ENCODE measurements at regions of chr1 and their contacts with region 1.

Region 1: GRCh38 chr1:205791568-205792180 is 16.4 kb upstream of the RAB29 start:
- DNase-seq: peak; percentile 72 to 86 (median 78)
- ATAC-seq: peak; percentile 97
- H3K4me3 ChIP-seq: no peak overlapping the region
- H3K27ac ChIP-seq: no peak overlapping the region
- H3K4me1 ChIP-seq: peaks cover 7 to 15% of the 10 kb centered on the region in 2 experiments; a peak in 4 of 5 replicates
- H3K27me3 ChIP-seq: no peaks in the 10 kb centered on the region
- CTCF ChIP-seq: peak; percentile 92 to 98 (median 97)
- EP300 ChIP-seq: no peak
- POLR2A ChIP-seq: no peak
- RAD21 ChIP-seq: peak; percentile 95 to 97

Region 2: DNA sequence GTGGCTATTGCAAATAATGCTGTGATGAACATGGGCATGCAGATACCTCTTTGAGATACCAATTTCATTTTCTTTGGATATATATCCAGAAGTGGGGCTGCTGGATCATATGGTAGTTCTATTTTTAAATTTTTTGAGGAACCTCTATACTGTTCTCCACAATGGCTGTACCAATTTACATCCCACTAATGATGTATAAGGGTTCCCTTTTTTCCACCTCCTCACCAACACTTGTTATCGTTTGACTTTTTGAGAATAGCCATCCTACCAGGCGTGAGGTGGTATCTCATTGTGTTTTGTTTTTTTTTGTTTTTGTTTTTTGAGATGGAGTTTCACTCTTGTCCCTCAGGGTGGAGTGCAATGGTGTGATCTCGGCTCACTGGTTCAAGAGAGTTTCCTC is 35.1 kb before region 1 on chr1:
- CTCF ChIA-PET with region 1: no interaction called
- POLR2A ChIA-PET with region 1: no interaction called
- in situ Hi-C with region 1: no loop called
- intact Hi-C with region 1: no loop called
- DNase-seq: no peak
- ATAC-seq: no peak
- H3K4me3 ChIP-seq: no peak overlapping the region
- H3K27ac ChIP-seq: no peak overlapping the region
- H3K4me1 ChIP-seq: peaks cover 0 to 14% of the 10 kb centered on the region in 2 experiments; a peak in 2 of 5 replicates
- H3K27me3 ChIP-seq: no peaks in the 10 kb centered on the region
- CTCF ChIP-seq: no peak
- EP300 ChIP-seq: no peak
- POLR2A ChIP-seq: no peak
- RAD21 ChIP-seq: no peak

Region 3: GRCh38 chr1:205812878-205813754 is 21.4 kb after region 1 on chr1 and contains the start of gene SLC41A1:
- CTCF ChIA-PET with region 1: interaction called, 3 read pairs
- POLR2A ChIA-PET with region 1: interaction called, 5 read pairs
- in situ Hi-C with region 1: no loop called
- intact Hi-C with region 1: loop called (anchors 2 kb)
- DNase-seq: peak; percentile 95 to 100 (median 100)
- ATAC-seq: peak; percentile 95
- H3K4me3 ChIP-seq: peak within 1 kb of the TSS; percentile 85
- H3K27ac ChIP-seq: peak within 1 kb of the TSS; percentile 60
- H3K4me1 ChIP-seq: peaks cover 32 to 41% of the 10 kb centered on the region in 2 experiments; a peak in 4 of 5 replicates
- H3K27me3 ChIP-seq: no peaks in the 10 kb centered on the region
- CTCF ChIP-seq: no peak
- EP300 ChIP-seq: no peak
- POLR2A ChIP-seq: peak; percentile 68
- RAD21 ChIP-seq: no peak
- polyA plus RNA-seq, gene SLC41A1: 4.1 to 5.5 TPM

Region 4: DNA sequence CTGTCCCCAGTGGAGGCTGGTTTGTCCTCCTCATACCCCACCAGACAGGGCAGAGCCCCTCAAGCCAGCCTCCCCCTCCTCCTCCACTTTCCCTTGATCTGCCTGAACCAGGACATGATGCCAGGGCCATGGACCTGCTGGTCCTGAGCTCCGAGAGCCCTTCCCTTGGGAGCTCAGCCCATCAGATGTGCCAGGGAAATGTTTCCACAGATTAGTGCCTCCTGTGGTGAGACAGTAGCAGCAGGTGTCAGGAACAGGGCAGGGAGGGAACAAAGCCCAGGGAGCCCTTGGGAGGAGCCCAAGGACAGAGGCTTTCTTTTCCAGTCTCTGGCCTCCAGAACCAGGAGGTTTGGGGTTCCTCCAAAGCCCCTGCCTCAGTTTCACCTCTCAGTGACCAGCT is 35.9 kb after region 1 on chr1:
- CTCF ChIA-PET with region 1: no interaction called
- POLR2A ChIA-PET with region 1: no interaction called
- in situ Hi-C with region 1: no loop called
- intact Hi-C with region 1: no loop called
- DNase-seq: no peak
- ATAC-seq: 0 out of 3 replicates have a peak, but pooled peaks have one; percentile 34
- H3K4me3 ChIP-seq: no peak overlapping the region
- H3K27ac ChIP-seq: no peak overlapping the region
- H3K4me1 ChIP-seq: no peaks in the 10 kb centered on the region; a peak in 1 of 5 replicates
- H3K27me3 ChIP-seq: peaks cover 29 to 36% of the 10 kb centered on the region in 2 experiments
- CTCF ChIP-seq: no peak; a peak in 1 of 6 replicates
- EP300 ChIP-seq: no peak
- POLR2A ChIP-seq: no peak
- RAD21 ChIP-seq: no peak

Region 5: GRCh38 chr1:205907794-205908193 is 116.1 kb after region 1 on chr1:
- CTCF ChIA-PET with region 1: interaction called, 7 read pairs
- POLR2A ChIA-PET with region 1: interaction called, 3 read pairs
- in situ Hi-C with region 1: no loop called
- intact Hi-C with region 1: loop called (anchors 1 kb)
- DNase-seq: peak in 3 of 4 experiments; percentile 7 to 36 (median 14)
- ATAC-seq: peak; percentile 85
- H3K4me3 ChIP-seq: no peak overlapping the region
- H3K27ac ChIP-seq: no peak overlapping the region
- H3K4me1 ChIP-seq: no peaks in the 10 kb centered on the region
- H3K27me3 ChIP-seq: peaks cover 3 to 5% of the 10 kb centered on the region in 2 experiments; a peak in 4 of 5 replicates
- CTCF ChIP-seq: peak; percentile 59 to 72 (median 63)
- EP300 ChIP-seq: no peak
- POLR2A ChIP-seq: no peak
- RAD21 ChIP-seq: peak; percentile 64 to 71

Region 6: GRCh38 chr1:205925730-205926129 is 134.1 kb after region 1 on chr1:
- CTCF ChIA-PET with region 1: no interaction called
- POLR2A ChIA-PET with region 1: no interaction called
- in situ Hi-C with region 1: loop called (anchors 5 kb)
- intact Hi-C with region 1: no loop called
- DNase-seq: no peak
- ATAC-seq: no peak
- H3K4me3 ChIP-seq: no peak overlapping the region
- H3K27ac ChIP-seq: no peak overlapping the region
- H3K4me1 ChIP-seq: peaks cover under 1 to 10% of the 10 kb centered on the region in 2 experiments; a peak in 3 of 5 replicates
- H3K27me3 ChIP-seq: peaks cover 43 to 96% of the 10 kb centered on the region in 2 experiments
- CTCF ChIP-seq: no peak
- EP300 ChIP-seq: no peak
- POLR2A ChIP-seq: no peak
- RAD21 ChIP-seq: no peak

Region 7: GRCh38 chr1:205977402-205978014 is 185.8 kb after region 1 on chr1:
- CTCF ChIA-PET with region 1: interaction called, 33 read pairs
- POLR2A ChIA-PET with region 1: interaction called, 20 read pairs
- in situ Hi-C with region 1: loop called (anchors 5 kb)
- intact Hi-C with region 1: loop called (anchors 1 kb)
- DNase-seq: peak; percentile 79 to 92 (median 88)
- ATAC-seq: peak; percentile 97
- H3K4me3 ChIP-seq: no peak overlapping the region
- H3K27ac ChIP-seq: no peak overlapping the region
- H3K4me1 ChIP-seq: peaks cover 0 to 4% of the 10 kb centered on the region in 2 experiments; a peak in 1 of 5 replicates
- H3K27me3 ChIP-seq: peaks cover 22 to 41% of the 10 kb centered on the region in 2 experiments
- CTCF ChIP-seq: peak; percentile 96 to 98 (median 98)
- EP300 ChIP-seq: no peak
- POLR2A ChIP-seq: no peak
- RAD21 ChIP-seq: peak; percentile 99 to 100

Region 8: DNA sequence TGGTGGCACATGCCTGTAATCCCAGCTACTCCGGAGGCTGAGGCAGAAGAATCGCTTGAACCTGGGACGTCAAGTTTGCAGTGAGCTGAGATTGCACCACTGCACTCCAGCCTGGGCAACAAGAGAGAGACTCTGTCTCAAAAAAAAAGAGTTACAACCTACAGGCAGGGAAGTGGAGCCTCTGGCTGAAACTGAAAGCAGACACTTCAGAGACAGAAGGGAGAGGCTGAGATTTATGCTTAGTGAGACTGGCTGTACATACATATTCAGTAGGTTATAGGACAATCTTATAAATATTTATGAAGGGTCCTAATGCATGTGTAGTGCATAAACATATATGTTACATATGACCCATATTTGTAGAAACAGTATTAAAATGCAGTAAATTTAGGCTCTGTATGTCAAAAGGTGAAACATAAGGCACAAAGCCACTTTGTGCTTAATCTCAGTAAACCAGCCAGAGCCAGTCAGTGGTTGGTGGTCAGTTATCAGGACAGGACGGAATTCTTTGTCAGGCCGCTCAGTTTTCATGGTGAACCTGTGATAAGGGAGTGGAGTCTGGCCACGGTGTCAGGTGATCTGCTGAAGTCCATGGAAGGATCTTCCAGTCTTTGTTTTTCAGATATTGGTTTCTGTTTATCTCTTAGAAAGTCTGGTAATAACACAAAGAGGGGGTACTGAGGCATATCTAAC is 275.0 kb after region 1 on chr1:
- CTCF ChIA-PET with region 1: no interaction called
- POLR2A ChIA-PET with region 1: no interaction called
- in situ Hi-C with region 1: no loop called
- intact Hi-C with region 1: no loop called
- DNase-seq: peak; percentile 32 to 75 (median 49)
- ATAC-seq: peak; percentile 90
- H3K4me3 ChIP-seq: no peak overlapping the region
- H3K27ac ChIP-seq: no peak overlapping the region
- H3K4me1 ChIP-seq: peaks cover 6 to 13% of the 10 kb centered on the region in 2 experiments; a peak in 4 of 5 replicates
- H3K27me3 ChIP-seq: peaks cover 15 to 21% of the 10 kb centered on the region in 2 experiments; a peak in 4 of 5 replicates
- CTCF ChIP-seq: no peak
- EP300 ChIP-seq: peak; percentile 87
- POLR2A ChIP-seq: no peak
- RAD21 ChIP-seq: no peak

Region 9: DNA sequence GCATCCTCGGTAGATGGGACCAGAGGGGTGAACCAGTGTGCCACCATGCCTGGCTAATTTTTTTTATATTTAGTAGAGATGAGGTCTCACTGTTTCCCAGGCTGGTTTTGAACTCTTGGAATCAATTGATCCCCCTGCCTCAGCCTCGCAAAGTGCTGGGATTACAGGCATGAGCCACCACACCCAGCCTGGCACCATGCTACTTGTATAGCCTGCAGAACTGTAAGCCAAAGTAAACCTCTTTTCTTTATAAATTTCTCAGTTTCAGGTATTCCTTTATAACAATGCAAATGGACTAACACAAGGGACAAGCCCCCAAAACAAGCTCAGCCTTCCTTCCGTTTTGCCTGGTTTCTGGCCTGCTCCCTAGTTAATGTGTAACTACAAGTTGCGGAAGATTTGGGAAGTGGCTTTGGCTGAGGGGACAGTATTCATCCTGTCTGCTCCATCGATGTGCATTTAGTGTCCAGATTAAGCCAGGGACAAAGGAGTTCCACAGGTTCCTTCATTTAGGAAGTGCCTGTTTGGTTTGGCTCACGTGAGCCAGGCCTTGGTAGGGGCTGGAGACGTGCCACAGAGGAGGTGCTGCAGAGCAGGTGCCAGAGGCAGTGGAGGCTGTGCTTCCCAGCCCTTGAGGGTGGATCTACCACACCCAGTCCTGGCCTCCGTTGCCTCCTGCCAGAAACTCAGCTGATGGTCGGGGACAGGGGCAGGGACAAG is 321.1 kb after region 1 on chr1:
- CTCF ChIA-PET with region 1: interaction called, 3 read pairs
- POLR2A ChIA-PET with region 1: no interaction called
- in situ Hi-C with region 1: loop called (anchors 5 kb)
- intact Hi-C with region 1: no loop called
- DNase-seq: no peak
- ATAC-seq: no peak
- H3K4me3 ChIP-seq: no peak overlapping the region
- H3K27ac ChIP-seq: no peak overlapping the region
- H3K4me1 ChIP-seq: peaks cover 5 to 17% of the 10 kb centered on the region in 2 experiments; a peak in 3 of 5 replicates
- H3K27me3 ChIP-seq: peaks cover 46 to 70% of the 10 kb centered on the region in 2 experiments
- CTCF ChIP-seq: no peak
- EP300 ChIP-seq: no peak
- POLR2A ChIP-seq: no peak
- RAD21 ChIP-seq: no peak

Measured in K562 (cell line).